Posterior cingulate gyrus (tissue), 11 donors: ENCODE measurements at regions of chr1 and their contacts with region 1.

Region 1: GRCh38 chr1:245156081-245156735 is 1.4 kb downstream of the KIF26B start:
- DNase-seq: peak; percentile 66 to 97 (median 81)

Region 2: DNA sequence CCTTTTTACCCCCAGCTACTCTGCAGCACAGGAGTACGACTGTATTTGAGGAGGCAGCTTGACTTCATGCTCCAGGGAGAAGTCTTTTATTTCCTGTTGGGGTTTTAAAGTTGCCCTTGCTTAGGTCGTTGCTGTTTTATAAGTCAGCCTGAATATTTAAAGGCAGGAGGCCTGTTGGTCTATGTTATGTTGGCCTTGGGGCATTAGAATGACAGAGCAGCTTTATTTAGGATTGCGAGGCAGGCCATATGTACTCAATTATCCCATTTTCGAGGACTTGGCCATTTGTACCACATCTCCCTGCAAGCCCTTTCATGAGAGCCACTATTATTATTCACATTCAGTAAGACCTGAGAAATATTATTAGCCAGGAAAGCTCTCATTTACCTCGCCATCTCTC is 45.6 kb after region 1 on chr1:
- intact Hi-C with region 1: no loop called
- DNase-seq: peak in 1 of 10 donors; percentile 9

Region 3: DNA sequence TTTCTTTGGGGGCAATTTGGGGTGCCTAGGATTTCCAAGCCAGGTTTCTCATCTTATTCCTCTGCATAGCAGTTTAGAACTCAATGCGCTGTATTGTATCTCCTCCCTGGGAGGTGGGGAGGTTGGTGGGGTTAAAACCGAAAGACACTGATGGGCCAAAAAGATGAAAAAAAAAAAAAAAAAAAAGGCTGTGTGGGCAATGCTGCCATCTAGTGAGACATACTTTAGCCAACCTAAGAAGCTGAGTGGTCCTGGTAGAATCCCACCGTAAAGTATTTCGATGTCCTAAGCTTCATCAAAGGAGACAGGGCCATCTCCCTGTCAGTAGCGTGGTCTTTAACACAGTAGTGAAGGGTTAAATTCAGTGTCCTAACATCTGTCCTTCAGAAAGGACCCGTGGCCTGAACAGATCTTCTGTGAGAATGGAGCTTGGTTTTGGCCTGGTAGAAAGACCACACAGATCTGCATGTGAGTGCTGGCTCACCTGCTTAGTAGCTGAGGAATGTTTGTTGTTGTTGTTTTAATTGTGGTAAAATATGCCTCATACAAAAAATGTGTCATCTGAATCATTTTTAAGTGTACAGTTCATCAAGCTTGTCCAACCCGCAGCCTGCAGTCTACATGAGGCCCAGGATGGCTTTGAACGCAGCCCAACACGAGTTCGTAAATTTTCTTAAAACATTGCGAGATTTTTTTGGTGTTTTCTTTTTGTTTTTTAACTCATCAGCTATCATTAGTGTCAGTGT is 224.8 kb after region 1 on chr1:
- intact Hi-C with region 1: loop called (anchors 1 kb)
- DNase-seq: no peak

Region 4: GRCh38 chr1:246002725-246003441 is 846.7 kb after region 1 on chr1:
- intact Hi-C with region 1: loop called (anchors 1 kb)
- DNase-seq: peak; percentile 52 to 97 (median 87)

Region 5: DNA sequence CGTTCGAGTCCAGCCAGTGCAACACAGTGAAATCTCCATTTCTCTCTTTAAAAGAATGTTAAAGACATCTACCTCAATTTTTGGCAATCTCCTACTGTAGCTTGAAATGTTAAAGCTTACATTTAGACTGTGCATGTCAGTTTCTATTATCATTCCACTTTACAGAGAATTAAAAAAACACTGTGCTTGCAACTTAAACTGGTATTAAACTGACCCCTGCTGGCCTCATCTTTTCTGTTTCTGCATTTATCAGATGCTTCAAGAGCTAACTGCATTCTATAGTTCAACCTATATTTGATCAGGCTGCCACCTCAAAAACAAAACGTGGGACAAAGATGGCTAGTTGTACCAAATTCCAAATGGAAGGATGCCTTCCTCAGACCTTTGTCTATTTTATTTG is 1124.3 kb after region 1 on chr1:
- intact Hi-C with region 1: loop called (anchors 10 kb)
- DNase-seq: no peak

Region 6: GRCh38 chr1:246450611-246451251 is 1294.5 kb after region 1 on chr1:
- intact Hi-C with region 1: loop called (anchors 5 kb)
- DNase-seq: no peak

Region 7: DNA sequence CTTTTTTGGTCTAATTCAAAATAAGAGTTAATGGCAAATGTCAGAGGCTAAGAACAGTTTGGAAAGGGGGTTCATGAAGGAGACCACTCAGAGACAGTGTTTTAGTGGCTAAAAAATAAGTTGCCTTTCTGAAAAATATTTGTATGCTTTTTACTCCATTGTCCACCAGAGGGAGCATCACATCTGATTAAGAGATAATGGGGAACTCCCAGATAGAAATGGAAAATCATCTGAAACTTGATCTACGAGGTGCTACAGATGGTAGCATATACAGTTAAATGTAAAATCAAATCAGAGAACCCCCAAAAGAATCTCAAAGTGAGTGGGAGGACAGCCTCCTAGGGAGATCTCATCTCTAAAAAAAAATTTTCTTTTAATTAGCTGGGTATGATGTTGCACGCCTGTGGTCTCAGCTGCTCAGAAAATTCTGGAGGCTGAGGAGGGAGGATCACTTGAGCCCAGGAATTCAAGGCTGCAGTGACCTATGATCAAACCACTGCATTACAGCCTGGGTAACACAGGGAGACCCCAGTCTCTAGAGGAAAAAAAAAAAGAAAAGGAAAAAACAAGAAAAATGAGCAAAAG is 1341.2 kb after region 1 on chr1:
- intact Hi-C with region 1: loop called (anchors 5 kb)
- DNase-seq: no peak